ENCODE measurements at regions of chr5 and their contacts with region 1.

Region 1: DNA sequence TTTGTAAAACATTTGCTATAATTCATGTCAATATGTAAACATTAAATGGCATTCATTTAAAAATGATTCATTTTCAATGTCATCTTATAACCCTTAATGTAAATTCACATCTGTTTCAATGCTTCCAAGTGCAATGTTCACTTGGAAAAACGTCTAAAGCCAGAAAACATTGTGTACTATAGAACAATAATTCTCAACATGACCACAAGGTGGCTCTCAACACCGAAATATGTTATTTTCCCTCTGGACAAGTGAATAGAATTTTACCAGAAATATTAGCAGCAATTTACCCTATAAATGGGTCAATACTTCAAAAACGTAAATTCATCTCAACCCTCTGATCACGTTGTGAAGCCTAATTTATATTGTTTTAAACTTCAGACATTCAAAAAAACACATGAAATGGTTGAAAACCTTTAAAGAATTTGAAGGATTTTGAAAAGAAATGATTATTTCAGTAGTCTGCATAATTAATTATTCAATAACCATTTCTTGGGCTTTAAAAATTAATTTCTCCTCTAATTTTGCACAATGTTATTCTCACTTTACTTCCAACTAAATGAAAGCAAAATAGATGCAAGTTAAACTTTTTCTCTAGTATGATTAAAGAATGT is 11.0 kb downstream of the CDH10 start:
- DNase-seq: no peak
- ATAC-seq: no peak
- H3K4me3 ChIP-seq: no peak overlapping the region
- H3K27ac ChIP-seq: no peak overlapping the region
- H3K4me1 ChIP-seq: no peaks in the 10 kb centered on the region
- H3K27me3 ChIP-seq: peaks cover 0 to 5% (median 0%) of the 10 kb centered on the region in 9 donors
- CTCF ChIP-seq: peak; percentile 24 to 75 (median 54)
- POLR2A ChIP-seq: no peak

Region 2: GRCh38 chr5:24444414-24444813 is 189.4 kb before region 1 on chr5:
- intact Hi-C with region 1: loop called in 1 of 10 experiments (anchors 10 kb)
- DNase-seq: peak in 1 of 5 donors; percentile 26
- ATAC-seq: peak; percentile 46 to 80 (median 69)
- H3K4me3 ChIP-seq: no peak overlapping the region
- H3K27ac ChIP-seq: no peak overlapping the region
- H3K4me1 ChIP-seq: no peaks in the 10 kb centered on the region
- H3K27me3 ChIP-seq: no peaks in the 10 kb centered on the region
- CTCF ChIP-seq: no peak
- POLR2A ChIP-seq: no peak

Measured in heart left ventricle (tissue), 16 donors.